ENCODE measurements at regions of chr1 and their contacts with region 1.

Region 1: GRCh38 chr1:244864253-244865027 is at the start of gene HNRNPU:
- DNase-seq: peak; percentile 95
- H3K4me3 Mint-ChIP-seq: peak within 1 kb of the TSS; percentile 90
- H3K27ac Mint-ChIP-seq: peak within 1 kb of the TSS; percentile 99
- H3K4me1 Mint-ChIP-seq: peaks cover 31% of the 10 kb centered on the region
- H3K27me3 Mint-ChIP-seq: no peaks in the 10 kb centered on the region
- total RNA-seq, gene HNRNPU: 331 to 338 TPM

Region 2: DNA sequence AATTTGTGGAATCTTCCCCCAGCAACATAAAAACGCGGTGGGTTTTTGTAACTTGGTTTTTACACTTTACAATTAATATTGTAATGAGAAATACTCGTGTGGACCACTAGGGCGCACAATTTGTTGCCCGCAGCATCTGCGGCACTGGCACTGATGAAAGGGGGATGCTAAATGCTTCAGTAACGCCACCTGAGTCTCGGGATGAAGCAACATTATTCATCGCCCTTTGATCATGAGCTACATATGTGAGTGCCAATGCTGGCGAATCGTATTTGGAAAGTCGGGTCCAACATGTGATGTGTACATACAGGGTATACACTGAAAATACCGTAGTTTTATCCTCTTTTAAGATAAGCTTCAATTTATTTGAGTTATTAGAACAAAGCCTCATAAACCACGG is 63.2 kb before region 1 on chr1:
- CTCF ChIA-PET with region 1: interaction called, 6 read pairs
- intact Hi-C with region 1: loop called (anchors 2 kb)
- DNase-seq: peak; percentile 74
- H3K4me3 Mint-ChIP-seq: no peak overlapping the region
- H3K27ac Mint-ChIP-seq: no peak overlapping the region
- H3K4me1 Mint-ChIP-seq: peaks cover 2% of the 10 kb centered on the region
- H3K27me3 Mint-ChIP-seq: no peaks in the 10 kb centered on the region

Region 3: GRCh38 chr1:244843148-244843978 is 21.1 kb before region 1 on chr1:
- CTCF ChIA-PET with region 1: interaction called, 15 read pairs
- intact Hi-C with region 1: no loop called
- DNase-seq: no peak
- H3K4me3 Mint-ChIP-seq: no peak overlapping the region
- H3K27ac Mint-ChIP-seq: peak overlapping the region; percentile 82
- H3K4me1 Mint-ChIP-seq: peaks cover 62% of the 10 kb centered on the region
- H3K27me3 Mint-ChIP-seq: no peaks in the 10 kb centered on the region

Region 4: GRCh38 chr1:244918421-244919319 is 54.2 kb after region 1 on chr1:
- CTCF ChIA-PET with region 1: no interaction called
- intact Hi-C with region 1: loop called (anchors 1 kb)
- DNase-seq: peak; percentile 44
- H3K4me3 Mint-ChIP-seq: peak overlapping the region; percentile 77
- H3K27ac Mint-ChIP-seq: peak overlapping the region; percentile 30
- H3K4me1 Mint-ChIP-seq: peaks cover 11% of the 10 kb centered on the region
- H3K27me3 Mint-ChIP-seq: no peaks in the 10 kb centered on the region

Region 5: DNA sequence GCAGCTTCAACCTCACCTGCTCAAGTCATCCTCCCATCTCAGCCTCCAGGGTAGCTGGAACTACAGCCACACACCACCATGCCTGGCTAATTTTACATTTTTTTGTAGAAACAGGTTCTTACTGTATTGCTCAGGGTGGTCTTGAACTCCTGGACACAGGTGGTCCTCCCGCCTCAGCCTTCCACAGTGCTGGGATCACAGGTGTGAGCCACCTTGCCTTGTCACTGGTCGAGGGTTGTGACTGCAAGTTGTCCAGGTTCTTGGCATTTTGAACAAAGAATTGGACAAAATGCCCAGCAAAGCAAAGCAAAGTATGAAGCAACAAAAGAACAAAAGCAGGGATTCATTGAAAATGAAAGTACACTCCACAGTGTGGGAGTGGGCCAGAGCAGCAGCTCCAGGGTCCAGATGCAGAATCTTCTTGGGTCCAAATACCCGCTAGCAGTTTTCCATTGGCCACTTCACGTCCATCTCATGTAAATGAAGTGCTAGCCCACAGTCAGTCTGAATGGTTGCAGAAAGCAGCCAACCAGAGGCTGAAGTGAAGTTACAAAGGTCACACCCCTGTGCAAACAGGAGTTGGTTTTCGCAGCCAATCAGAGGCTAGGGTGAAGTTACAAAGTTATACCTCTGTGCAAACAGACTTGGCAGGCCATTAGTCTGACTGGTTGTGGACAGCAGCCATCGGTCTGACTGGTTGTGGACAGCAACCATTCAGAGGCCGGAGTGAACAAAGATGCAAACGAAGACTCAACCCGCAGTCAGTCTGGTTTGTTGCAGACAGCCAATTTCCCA is 180.8 kb after region 1 on chr1:
- CTCF ChIA-PET with region 1: interaction called, 14 read pairs
- intact Hi-C with region 1: loop called (anchors 1 kb)
- DNase-seq: no peak
- H3K4me3 Mint-ChIP-seq: no peak overlapping the region
- H3K27ac Mint-ChIP-seq: no peak overlapping the region
- H3K4me1 Mint-ChIP-seq: no peaks in the 10 kb centered on the region
- H3K27me3 Mint-ChIP-seq: no peaks in the 10 kb centered on the region

Measured in activated naive CD4-positive, alpha-beta T cell treated with anti-CD3 and anti-CD28 coated beads for 36 hours (primary cell).